ENCODE measurements at regions of chr2 and their contacts with region 1.

Region 1: GRCh38 chr2:204108330-204108751 is 171.8 kb downstream of the ICOS start:
- DNase-seq: peak; percentile 72
- H3K4me3 Mint-ChIP-seq: peak overlapping the region; percentile 71
- H3K27ac Mint-ChIP-seq: peak overlapping the region; percentile 96
- H3K4me1 Mint-ChIP-seq: peaks cover 75% of the 10 kb centered on the region
- H3K27me3 Mint-ChIP-seq: peaks cover 2% of the 10 kb centered on the region

Region 2: GRCh38 chr2:202870431-202871299 is 1237.7 kb before region 1 on chr2:
- CTCF ChIA-PET with region 1: no interaction called
- intact Hi-C with region 1: no loop called
- DNase-seq: peak; percentile 85
- H3K4me3 Mint-ChIP-seq: peak overlapping the region; percentile 88
- H3K27ac Mint-ChIP-seq: peak overlapping the region; percentile 72
- H3K4me1 Mint-ChIP-seq: peaks cover 7% of the 10 kb centered on the region
- H3K27me3 Mint-ChIP-seq: no peaks in the 10 kb centered on the region

Region 3: DNA sequence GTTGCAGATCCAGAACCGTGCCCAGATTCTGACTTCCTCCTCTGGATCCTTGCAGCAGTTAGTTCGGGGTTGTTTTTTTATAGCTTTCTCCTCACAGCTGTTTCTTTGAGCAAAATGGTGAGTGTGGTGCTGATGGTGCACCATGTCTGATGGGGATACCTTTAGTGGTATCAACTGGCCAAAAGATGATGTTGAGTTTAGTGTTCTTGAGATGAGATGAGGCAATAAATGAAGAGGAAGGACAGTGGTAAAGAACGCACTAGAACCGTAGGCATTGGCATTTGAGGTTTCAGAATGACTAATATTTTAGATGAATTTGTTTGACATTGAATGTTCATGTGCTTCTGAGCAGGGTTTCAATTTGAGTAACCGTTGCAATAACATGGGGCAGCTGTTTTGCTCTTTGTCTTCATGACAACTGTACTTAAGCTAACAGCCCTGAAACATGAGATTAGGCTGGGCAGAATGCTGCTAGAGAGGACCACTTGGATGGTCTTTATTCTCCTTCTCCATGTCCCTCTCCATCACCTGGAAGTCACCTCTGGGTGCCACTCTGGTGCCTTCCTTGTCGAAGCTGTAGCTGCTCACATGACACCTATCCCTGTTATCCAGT is 236.9 kb before region 1 on chr2:
- CTCF ChIA-PET with region 1: no interaction called
- intact Hi-C with region 1: loop called (anchors 2 kb)
- DNase-seq: peak; percentile 69
- H3K4me3 Mint-ChIP-seq: peak overlapping the region; percentile 92
- H3K27ac Mint-ChIP-seq: peak overlapping the region; percentile 99
- H3K4me1 Mint-ChIP-seq: peaks cover 55% of the 10 kb centered on the region
- H3K27me3 Mint-ChIP-seq: no peaks in the 10 kb centered on the region

Region 4: GRCh38 chr2:204024503-204024902 is 83.8 kb before region 1 on chr2:
- CTCF ChIA-PET with region 1: interaction called, 5 read pairs
- intact Hi-C with region 1: loop called (anchors 1 kb)
- DNase-seq: peak; percentile 71
- H3K4me3 Mint-ChIP-seq: no peak overlapping the region
- H3K27ac Mint-ChIP-seq: no peak overlapping the region
- H3K4me1 Mint-ChIP-seq: peaks cover 51% of the 10 kb centered on the region
- H3K27me3 Mint-ChIP-seq: no peaks in the 10 kb centered on the region

Region 5: GRCh38 chr2:204177977-204178540 is 69.7 kb after region 1 on chr2:
- CTCF ChIA-PET with region 1: interaction called, 15 read pairs
- intact Hi-C with region 1: loop called (anchors 1 kb)
- DNase-seq: peak; percentile 88
- H3K4me3 Mint-ChIP-seq: no peak overlapping the region
- H3K27ac Mint-ChIP-seq: no peak overlapping the region
- H3K4me1 Mint-ChIP-seq: no peaks in the 10 kb centered on the region
- H3K27me3 Mint-ChIP-seq: peaks cover 5% of the 10 kb centered on the region

Region 6: GRCh38 chr2:204871231-204871953 is 763.1 kb after region 1 on chr2:
- CTCF ChIA-PET with region 1: no interaction called
- intact Hi-C with region 1: loop called (anchors 5 kb)
- DNase-seq: no peak
- H3K4me3 Mint-ChIP-seq: no peak overlapping the region
- H3K27ac Mint-ChIP-seq: no peak overlapping the region
- H3K4me1 Mint-ChIP-seq: peaks cover 31% of the 10 kb centered on the region
- H3K27me3 Mint-ChIP-seq: no peaks in the 10 kb centered on the region

Region 7: GRCh38 chr2:205680067-205680466 is 1571.7 kb after region 1 on chr2:
- CTCF ChIA-PET with region 1: no interaction called
- intact Hi-C with region 1: loop called (anchors 1 kb)
- DNase-seq: peak; percentile 73
- H3K4me3 Mint-ChIP-seq: no peak overlapping the region
- H3K27ac Mint-ChIP-seq: no peak overlapping the region
- H3K4me1 Mint-ChIP-seq: peaks cover 19% of the 10 kb centered on the region
- H3K27me3 Mint-ChIP-seq: peaks cover 36% of the 10 kb centered on the region

Measured in activated naive CD4-positive, alpha-beta T cell treated with anti-CD3 and anti-CD28 coated beads for 36 hours (primary cell).